ENCODE measurements at regions of chr2 and their contacts with region 1.

Region 1: GRCh38 chr2:121071034-121071504 is 213.9 kb downstream of the TFCP2L1 start:
- DNase-seq: peak; percentile 90
- H3K4me3 ChIP-seq: peak overlapping the region in 1 of 2 experiments; percentile 11; a peak in 1 of 4 replicates
- H3K27ac ChIP-seq: no peak overlapping the region
- H3K4me1 ChIP-seq: peaks cover 0 to 19% of the 10 kb centered on the region in 2 experiments; a peak in 1 of 4 replicates
- H3K27me3 ChIP-seq: peaks cover 12% of the 10 kb centered on the region; the same call in 1 of the 2 replicates
- CTCF ChIP-seq: peak; percentile 97
- EP300 ChIP-seq: no peak
- RAD21 ChIP-seq: peak; percentile 91

Region 2: GRCh38 chr2:120712180-120712681 is 358.8 kb before region 1 on chr2:
- CTCF ChIA-PET with region 1: interaction called, 16 read pairs
- POLR2A ChIA-PET with region 1: no interaction called
- DNase-seq: peak; percentile 46
- H3K4me3 ChIP-seq: no peak overlapping the region
- H3K27ac ChIP-seq: no peak overlapping the region
- H3K4me1 ChIP-seq: peaks cover 0 to 28% of the 10 kb centered on the region in 2 experiments; a peak in 1 of 4 replicates
- H3K27me3 ChIP-seq: no peaks in the 10 kb centered on the region
- CTCF ChIP-seq: no peak
- EP300 ChIP-seq: peak in 1 of 2 experiments; percentile 59; a peak in 2 of 4 replicates
- RAD21 ChIP-seq: no peak

Region 3: GRCh38 chr2:120735746-120736170 is 335.3 kb before region 1 on chr2 and contains the start of gene GLI2:
- CTCF ChIA-PET with region 1: interaction called, 12 read pairs
- POLR2A ChIA-PET with region 1: no interaction called
- DNase-seq: peak; percentile 92
- H3K4me3 ChIP-seq: peak within 1 kb of the TSS; percentile 80 to 88
- H3K27ac ChIP-seq: peak within 1 kb of the TSS; percentile 74 to 81
- H3K4me1 ChIP-seq: peaks cover 11 to 22% of the 10 kb centered on the region in 2 experiments; a peak in 3 of 4 replicates
- H3K27me3 ChIP-seq: no peaks in the 10 kb centered on the region
- CTCF ChIP-seq: peak; percentile 78
- EP300 ChIP-seq: no peak
- RAD21 ChIP-seq: peak; percentile 66
- polyA plus RNA-seq, gene GLI2: 2.0 and 3.4 TPM in 2 replicates

Region 4: GRCh38 chr2:120847700-120848321 is 223.3 kb before region 1 on chr2:
- CTCF ChIA-PET with region 1: interaction called, 14 read pairs
- POLR2A ChIA-PET with region 1: no interaction called
- DNase-seq: peak; percentile 84
- H3K4me3 ChIP-seq: no peak overlapping the region
- H3K27ac ChIP-seq: peak overlapping the region in 1 of 2 experiments; percentile 64; a peak in 2 of 4 replicates
- H3K4me1 ChIP-seq: peaks cover 0 to 51% of the 10 kb centered on the region in 2 experiments; a peak in 1 of 4 replicates
- H3K27me3 ChIP-seq: no peaks in the 10 kb centered on the region
- CTCF ChIP-seq: no peak
- EP300 ChIP-seq: peak in 1 of 2 experiments; percentile 59; a peak in 1 of 4 replicates
- RAD21 ChIP-seq: peak; percentile 52

Region 5: GRCh38 chr2:120904830-120905234 is 166.2 kb before region 1 on chr2:
- CTCF ChIA-PET with region 1: interaction called, 27 read pairs
- POLR2A ChIA-PET with region 1: no interaction called
- DNase-seq: peak; percentile 50
- H3K4me3 ChIP-seq: no peak overlapping the region
- H3K27ac ChIP-seq: peak overlapping the region in 1 of 2 experiments; percentile 97; a peak in 2 of 4 replicates
- H3K4me1 ChIP-seq: peaks cover 0 to 61% of the 10 kb centered on the region in 2 experiments; a peak in 2 of 4 replicates
- H3K27me3 ChIP-seq: no peaks in the 10 kb centered on the region
- CTCF ChIP-seq: no peak
- EP300 ChIP-seq: peak in 1 of 2 experiments; percentile 62; a peak in 1 of 4 replicates
- RAD21 ChIP-seq: no peak

Region 6: DNA sequence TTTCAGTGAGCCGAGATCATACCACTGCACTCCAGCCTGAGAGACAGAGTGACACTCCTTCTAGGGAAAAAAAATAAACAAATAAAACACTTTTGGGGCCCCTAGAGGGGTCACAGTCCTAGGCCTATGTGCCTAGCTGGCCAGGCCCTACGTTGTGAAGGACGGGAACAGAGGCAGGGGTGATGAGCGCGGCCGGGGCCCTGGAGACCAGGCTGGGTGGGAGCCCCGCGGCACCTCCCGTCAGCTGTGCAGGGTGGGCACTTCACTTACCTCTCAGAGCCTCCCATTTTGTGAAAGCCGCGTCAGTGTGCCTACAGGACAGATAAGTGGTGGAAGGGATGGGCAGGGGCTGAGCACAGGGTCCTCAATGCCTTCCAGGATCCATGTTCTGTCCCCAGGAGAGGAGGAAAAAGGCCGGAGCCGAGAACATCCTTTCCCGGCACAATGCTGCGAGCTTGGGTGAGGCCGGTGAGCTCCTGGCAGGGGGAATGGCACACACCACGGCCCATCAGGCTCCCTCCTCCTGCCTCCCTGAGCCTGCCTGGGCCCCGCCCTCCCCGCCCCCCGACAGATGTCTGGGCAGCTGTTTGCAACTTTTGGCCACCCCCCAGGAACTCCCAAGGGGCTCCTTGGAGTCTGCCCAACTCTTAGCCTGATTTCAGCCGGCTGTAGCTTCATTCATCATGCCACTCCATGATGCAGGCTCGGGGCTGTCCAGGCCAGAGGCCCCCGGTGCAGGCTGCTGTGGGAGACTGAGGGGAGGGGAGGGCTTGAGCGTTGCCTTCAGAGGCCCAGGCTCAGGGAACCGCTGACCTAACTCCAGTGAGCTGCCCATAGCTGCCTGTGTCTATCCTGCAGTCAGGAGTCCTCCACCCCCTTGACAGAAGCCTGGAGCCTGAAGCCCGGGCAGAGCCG is 17.4 kb after region 1 on chr2:
- CTCF ChIA-PET with region 1: interaction called, 32 read pairs
- POLR2A ChIA-PET with region 1: no interaction called
- DNase-seq: no peak
- H3K4me3 ChIP-seq: no peak overlapping the region
- H3K27ac ChIP-seq: no peak overlapping the region
- H3K4me1 ChIP-seq: no peaks in the 10 kb centered on the region; a peak in 1 of 4 replicates
- H3K27me3 ChIP-seq: no peaks in the 10 kb centered on the region
- CTCF ChIP-seq: no peak
- EP300 ChIP-seq: no peak
- RAD21 ChIP-seq: no peak

Region 7: GRCh38 chr2:121333834-121334558 is 262.9 kb after region 1 on chr2:
- CTCF ChIA-PET with region 1: no interaction called
- POLR2A ChIA-PET with region 1: no interaction called
- DNase-seq: no peak
- H3K4me3 ChIP-seq: no peak overlapping the region
- H3K27ac ChIP-seq: no peak overlapping the region
- H3K4me1 ChIP-seq: no peaks in the 10 kb centered on the region; a peak in 1 of 4 replicates
- H3K27me3 ChIP-seq: no peaks in the 10 kb centered on the region
- CTCF ChIP-seq: no peak
- EP300 ChIP-seq: no peak
- RAD21 ChIP-seq: no peak

Measured in SK-N-SH (cell line).